Left colon (tissue), 2 donors: ENCODE measurements at regions of chr1 and their contacts with region 1.

Region 1: GRCh38 chr1:218351391-218352074 is 6.4 kb downstream of the TGFB2 start:
- DNase-seq: no peak
- ATAC-seq: no peak

Region 2: DNA sequence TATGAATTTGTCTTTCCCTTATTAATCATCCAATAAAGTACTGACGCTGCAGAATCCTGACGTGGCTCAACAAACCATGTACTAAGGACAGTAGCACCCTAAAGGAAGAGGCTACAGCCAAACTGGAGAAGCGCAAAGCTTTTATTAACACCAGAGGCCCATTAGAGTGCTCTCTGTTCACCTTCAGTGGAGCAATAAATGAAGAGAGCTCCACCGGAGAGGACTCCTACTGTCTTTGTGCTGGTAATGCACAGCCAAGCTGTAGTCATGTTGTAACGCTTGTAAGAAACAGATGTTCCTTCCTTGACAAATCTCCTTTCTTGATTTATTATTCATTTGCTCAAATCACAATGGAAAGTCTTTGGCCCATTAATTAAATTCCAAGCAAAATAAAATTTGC is 287.1 kb before region 1 on chr1:
- intact Hi-C with region 1: no loop called
- DNase-seq: no peak
- ATAC-seq: no peak

Region 3: DNA sequence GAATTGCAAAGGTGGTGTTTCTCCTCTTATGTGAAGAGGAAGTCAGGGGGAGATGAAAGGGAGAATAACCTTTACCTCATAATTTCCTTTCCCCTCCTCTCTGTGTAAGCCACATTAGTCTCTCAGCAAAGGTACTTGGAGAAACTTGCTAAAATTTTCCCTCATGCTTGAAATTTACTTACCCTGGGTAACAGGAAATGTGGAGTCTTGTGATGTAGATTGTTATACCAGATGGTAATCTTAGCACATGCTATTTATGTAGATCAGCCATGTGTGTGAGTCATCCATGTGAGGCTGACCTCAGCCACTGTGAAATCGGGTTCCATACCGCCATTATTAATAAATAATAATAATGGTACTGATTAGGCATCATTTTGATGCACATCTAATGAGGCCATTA is 122.0 kb after region 1 on chr1:
- intact Hi-C with region 1: no loop called
- DNase-seq: no peak
- ATAC-seq: no peak

Region 4: GRCh38 chr1:219173758-219174588 is 822.4 kb after region 1 on chr1 and contains the start of gene LYPLAL1:
- intact Hi-C with region 1: loop called in 1 of 2 experiments (anchors 10 kb)
- DNase-seq: peak; percentile 82 to 91
- ATAC-seq: peak; percentile 98
- total RNA-seq, gene LYPLAL1: 14.8 to 22.7 TPM